ENCODE measurements at regions of chr4 and their contacts with region 1.

Region 1: DNA sequence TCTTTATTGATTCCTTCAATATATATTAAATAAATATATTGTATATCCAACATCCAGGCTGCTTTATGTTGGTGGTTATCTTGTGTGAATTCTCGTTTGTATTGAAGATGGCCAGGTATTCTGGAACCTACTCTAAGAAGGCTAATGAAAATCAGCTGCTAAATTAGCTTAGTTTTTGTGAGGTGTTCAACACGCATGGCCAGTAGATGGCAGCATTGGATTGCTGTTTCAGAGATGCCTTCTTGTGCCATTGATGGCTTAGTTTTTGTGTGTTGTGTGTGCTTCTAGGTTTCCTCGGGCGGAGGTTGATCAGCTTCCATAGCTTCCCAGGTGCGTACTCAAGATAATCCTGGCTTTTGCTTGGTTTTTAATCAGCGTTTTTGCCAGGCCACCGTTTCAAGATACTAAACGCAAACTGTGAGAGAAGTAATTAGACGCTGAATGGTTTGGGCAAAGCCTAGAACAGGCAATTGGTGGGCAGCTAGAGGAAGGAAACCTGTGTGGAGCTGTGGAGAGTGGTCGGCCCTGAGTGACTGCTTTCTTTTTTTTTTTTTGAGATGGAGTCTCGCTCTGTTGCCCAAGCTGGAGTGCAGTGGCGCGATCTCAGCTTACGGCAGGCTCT is 15.1 kb downstream of the NOCT start:
- DNase-seq: peak; percentile 56
- H3K4me3 Mint-ChIP-seq: no peak overlapping the region
- H3K27ac Mint-ChIP-seq: no peak overlapping the region
- H3K4me1 Mint-ChIP-seq: peaks cover 7% of the 10 kb centered on the region
- H3K27me3 Mint-ChIP-seq: no peaks in the 10 kb centered on the region
- CTCF ChIP-seq: no peak

Region 2: DNA sequence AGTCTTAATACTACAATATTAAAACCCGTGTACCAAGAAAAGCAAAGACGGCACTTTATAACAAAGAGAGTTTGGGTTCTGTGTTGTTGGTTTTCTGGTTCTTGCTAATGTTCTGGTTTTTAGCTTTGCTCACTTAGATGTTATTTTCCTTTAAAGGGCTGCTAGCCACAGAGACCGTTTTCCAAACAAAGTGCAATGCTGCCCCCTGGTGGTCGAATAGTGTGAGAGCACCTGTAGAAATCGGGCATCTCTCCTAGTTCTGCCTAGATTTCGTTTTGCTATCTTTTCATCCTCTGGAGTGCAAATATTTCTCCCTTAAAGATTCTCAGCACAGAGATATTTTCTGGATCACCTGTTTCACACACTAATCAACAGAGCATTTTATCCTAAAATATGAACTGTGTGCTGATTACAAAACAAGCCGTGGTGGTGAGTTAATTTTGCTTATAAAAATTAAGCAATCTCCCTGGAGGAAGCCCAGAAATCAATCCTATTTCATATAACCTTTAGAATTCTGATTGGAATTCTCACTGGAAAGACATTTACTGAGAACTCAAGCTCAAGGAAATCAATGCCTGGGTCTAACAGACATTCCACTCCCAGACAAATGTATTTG is 349.6 kb before region 1 on chr4:
- CTCF ChIA-PET with region 1: no interaction called
- intact Hi-C with region 1: no loop called
- DNase-seq: peak; percentile 71
- H3K4me3 Mint-ChIP-seq: no peak overlapping the region
- H3K27ac Mint-ChIP-seq: no peak overlapping the region
- H3K4me1 Mint-ChIP-seq: peaks cover 23% of the 10 kb centered on the region
- H3K27me3 Mint-ChIP-seq: no peaks in the 10 kb centered on the region
- CTCF ChIP-seq: peak; percentile 77

Region 3: DNA sequence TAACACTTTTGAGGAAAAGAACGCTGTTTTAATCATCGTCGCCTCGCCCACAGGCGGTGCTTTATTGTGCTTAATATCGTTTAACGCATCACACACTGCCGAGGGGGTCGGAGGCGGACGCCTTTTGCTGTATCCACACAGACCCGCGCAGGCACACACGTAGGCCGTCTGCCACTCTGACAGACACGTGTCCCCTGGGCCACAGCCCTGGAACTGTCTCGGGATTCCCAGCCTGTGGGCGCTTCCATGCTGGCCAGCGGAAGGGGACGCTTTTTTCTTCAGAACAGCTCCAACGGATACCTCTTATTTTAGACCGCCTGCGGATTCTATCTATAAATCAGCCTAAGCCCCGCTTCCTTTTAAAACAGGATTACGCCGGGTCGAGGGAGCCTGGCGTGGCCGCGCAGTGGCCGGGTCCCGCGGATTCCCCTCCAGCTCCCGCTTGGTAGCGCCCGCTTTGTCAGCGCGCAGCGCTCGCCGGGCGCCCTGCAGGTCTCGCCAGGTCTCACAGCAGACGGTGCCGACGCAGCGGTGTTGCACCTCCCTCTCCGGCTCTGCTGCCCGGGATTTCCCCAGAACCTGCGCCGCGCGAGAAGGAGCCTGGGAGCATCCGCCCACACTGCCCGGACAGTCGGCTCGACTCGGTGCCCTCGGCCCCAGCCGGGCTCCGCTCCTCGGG is 15.3 kb before region 1 on chr4 and contains the start of gene NOCT:
- CTCF ChIA-PET with region 1: interaction called, 11 read pairs
- intact Hi-C with region 1: no loop called
- DNase-seq: peak; percentile 87
- H3K4me3 Mint-ChIP-seq: peak within 1 kb of the TSS; percentile 40
- H3K27ac Mint-ChIP-seq: peak within 1 kb of the TSS; percentile 81
- H3K4me1 Mint-ChIP-seq: peaks cover 48% of the 10 kb centered on the region
- H3K27me3 Mint-ChIP-seq: no peaks in the 10 kb centered on the region
- CTCF ChIP-seq: no peak
- total RNA-seq, gene NOCT: 11.4 and 17.3 TPM in 2 replicates

Region 4: DNA sequence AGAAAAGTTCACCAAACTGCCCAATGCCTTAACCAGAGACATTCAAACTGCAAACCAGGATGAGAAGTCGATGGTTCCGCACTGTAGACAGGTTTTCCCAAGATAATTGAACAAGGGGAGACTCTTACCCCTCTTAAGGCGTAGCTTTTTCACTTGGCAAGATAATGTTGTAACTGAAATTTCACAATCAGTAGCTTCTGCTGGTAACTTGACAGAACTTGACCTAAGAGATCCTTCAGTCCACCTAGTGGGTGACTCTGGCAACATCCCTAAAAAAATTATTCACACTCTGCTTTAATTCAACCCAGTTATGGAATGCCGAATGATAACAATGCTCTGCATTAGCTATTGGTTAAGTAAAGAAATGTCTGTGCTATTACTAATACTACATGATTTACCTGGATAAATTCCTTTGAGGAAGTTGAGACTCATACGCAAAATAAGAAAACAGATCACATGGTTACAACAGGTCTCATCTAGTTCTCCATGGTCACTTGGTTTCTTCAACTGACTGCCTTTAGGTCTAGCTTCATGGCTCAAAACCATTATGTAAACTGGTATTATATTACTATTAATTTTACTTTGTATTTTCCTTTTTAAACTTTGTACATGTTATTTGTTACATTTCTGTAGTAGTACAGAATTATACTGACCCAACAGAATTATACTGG is 137.2 kb after region 1 on chr4:
- CTCF ChIA-PET with region 1: no interaction called
- intact Hi-C with region 1: loop called (anchors 5 kb)
- DNase-seq: peak; percentile 9
- H3K4me3 Mint-ChIP-seq: no peak overlapping the region
- H3K27ac Mint-ChIP-seq: no peak overlapping the region
- H3K4me1 Mint-ChIP-seq: peaks cover 7% of the 10 kb centered on the region
- H3K27me3 Mint-ChIP-seq: no peaks in the 10 kb centered on the region
- CTCF ChIP-seq: peak; percentile 29

Measured in Calu3 (cell line).